Right ventricle myocardium inferior (tissue), 1 donor: ENCODE measurements at regions of chr11 and their contacts with region 1.

Region 1: DNA sequence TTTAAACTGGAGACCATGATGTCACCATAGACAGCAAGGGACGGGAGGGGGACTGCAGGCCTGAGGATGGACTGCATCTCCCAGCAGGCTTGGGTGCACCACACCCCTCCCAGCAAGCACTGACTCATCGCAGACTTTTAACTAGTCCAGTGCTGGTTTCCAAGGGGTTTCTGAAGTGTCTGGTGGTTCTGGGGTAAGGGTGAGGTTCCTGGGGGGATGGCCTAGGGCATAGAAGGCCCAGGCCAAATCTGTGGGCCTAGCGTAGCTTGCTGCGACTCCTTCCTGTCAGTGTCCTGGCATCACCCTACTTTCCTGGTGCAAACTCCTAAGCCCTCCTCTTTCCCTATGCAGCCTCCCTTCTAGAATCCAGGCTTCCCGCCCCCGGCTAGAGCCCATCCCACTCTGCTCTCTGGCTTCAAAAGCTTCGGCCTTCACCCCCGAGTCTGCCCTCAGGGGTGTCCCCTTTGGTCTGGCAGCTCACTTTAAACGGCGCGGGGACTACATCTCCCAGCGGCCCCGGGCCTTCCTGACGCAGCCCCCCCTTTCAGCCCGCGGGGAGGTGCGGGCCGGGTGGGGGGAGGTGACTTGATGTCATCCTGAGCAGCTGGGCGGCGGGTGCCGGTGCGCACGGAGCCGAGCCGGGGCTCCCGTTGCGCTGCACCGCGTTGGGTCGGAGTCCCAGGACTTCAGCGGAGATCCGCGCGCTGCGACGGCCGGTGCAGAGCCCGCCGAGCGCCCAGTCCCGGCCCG is at the start of gene PPP2R5B:
- DNase-seq: peak; percentile 97
- ATAC-seq: peak; percentile 97
- total RNA-seq, gene PPP2R5B: 20.6 TPM

Region 2: GRCh38 chr11:64971421-64972233 is 47.4 kb after region 1 on chr11 and contains the start of gene MAJIN:
- intact Hi-C with region 1: loop called (anchors 5 kb)
- DNase-seq: peak; percentile 92
- ATAC-seq: peak; percentile 81
- total RNA-seq, gene MAJIN: not detected

Region 3: DNA sequence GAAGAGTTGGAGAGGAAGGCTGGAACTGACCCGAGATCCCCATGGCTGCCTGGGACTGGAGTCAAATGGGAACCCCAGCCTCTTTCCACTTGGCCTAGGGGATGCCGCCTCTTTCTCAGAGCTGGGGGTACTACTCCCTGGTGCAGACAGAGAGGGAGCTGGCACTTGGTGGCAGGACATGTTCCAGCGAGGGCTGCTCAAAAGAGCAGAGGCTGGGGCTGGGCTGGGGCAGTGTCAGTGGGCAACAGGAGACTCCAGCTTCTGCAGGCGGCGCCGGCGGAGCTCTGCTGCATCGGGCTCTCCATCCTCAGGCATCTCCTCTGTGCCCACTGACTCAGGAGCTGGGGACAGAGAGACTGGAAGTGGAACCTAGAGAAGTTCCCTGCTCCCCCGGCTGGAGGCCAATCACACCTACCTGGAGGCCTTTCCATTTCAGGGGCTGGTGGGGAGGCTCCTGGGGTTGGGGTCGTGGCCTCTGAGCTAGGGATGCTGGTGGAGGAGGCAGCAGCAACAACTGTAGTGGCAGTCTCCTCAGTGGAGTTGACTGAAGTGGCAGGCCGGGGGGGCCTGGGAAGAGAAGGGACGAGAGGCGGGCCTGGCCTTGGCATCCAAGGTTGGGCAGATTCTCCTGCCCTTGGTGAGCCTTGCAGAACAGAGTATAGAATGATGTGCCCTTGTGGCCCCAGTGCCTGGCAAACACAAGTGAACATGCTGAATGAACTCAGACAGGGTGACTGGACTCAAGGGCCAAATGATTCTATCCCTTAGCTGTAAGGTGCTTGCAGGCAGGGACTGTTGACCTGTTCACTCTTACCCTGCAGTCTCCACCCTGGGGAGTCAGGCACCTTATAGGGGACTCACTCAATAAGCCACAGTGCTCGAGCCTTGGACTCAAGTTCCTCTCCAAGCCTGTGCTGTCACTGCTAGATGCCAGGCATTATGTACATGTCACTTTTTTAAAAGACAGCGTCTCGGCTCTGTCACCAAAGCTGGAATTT is 204.2 kb after region 1 on chr11:
- intact Hi-C with region 1: loop called (anchors 5 kb)
- DNase-seq: no peak
- ATAC-seq: no peak